Endothelial cell of umbilical vein (primary cell): ENCODE measurements at regions of chr13 and their contacts with region 1.

Region 1: DNA sequence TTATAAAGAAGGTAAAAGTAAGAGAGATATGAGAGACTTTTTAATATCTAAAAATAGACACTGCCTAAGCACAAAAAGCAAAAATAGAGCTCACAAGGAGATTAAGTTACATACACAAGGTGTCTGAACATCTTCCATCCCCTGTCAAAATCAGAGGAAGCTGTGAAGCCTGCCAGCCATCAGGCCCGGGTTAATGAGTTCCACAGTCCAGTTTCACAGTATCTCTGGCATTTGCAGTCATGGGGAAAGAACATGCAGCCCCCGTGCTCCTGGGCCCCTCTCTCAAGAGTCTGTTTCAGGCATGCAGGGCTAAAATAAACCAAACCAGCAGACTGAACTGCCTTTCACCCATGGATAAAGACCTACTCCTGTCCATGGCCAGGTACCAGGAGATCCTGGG is 79.2 kb downstream of the TBC1D4 start:
- DNase-seq: no peak
- H3K4me3 ChIP-seq: no peak overlapping the region
- H3K27ac ChIP-seq: no peak overlapping the region
- H3K4me1 ChIP-seq: no peaks in the 10 kb centered on the region
- H3K27me3 ChIP-seq: no peaks in the 10 kb centered on the region
- CTCF ChIP-seq: no peak
- POLR2A ChIP-seq: no peak

Region 2: GRCh38 chr13:75437582-75438318 is 35.0 kb after region 1 on chr13:
- CTCF ChIA-PET with region 1: interaction called, 3 read pairs
- POLR2A ChIA-PET with region 1: no interaction called
- dilution Hi-C with region 1: no loop called
- intact Hi-C with region 1: loop called (anchors 5 kb)
- DNase-seq: no peak
- H3K4me3 ChIP-seq: no peak overlapping the region
- H3K27ac ChIP-seq: no peak overlapping the region
- H3K4me1 ChIP-seq: peaks cover 2% of the 10 kb centered on the region
- H3K27me3 ChIP-seq: no peaks in the 10 kb centered on the region
- CTCF ChIP-seq: no peak
- POLR2A ChIP-seq: no peak